ENCODE measurements at regions of chr6 and their contacts with region 1.

Region 1: DNA sequence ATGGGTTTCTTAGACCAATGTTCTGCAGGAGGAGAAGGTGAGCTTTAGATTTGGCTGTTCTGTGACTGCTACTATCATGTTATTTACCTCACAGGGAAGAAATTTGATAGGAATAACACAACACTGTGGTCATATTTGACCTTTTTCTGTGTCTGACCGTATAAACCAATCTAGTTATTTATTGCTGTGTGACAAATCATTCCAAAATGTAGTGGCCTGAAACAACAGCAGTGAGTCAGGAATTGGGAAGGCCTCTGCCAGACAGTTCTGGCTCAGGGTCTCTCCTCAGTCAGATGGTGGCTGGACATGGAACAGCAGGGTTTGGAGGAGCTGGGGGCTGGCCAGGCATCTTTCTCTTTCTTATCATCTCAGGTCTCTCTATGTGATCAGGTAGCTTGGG is 33.0 kb downstream of the RIPOR2 start:
- DNase-seq: no peak
- CTCF ChIP-seq: no peak

Region 2: GRCh38 chr6:24883618-24884017 is 19.2 kb before region 1 on chr6:
- CTCF ChIA-PET with region 1: interaction called, 22 read pairs
- POLR2A ChIA-PET with region 1: no interaction called
- DNase-seq: no peak
- CTCF ChIP-seq: no peak

Region 3: GRCh38 chr6:24888715-24889370 is 13.9 kb before region 1 on chr6:
- CTCF ChIA-PET with region 1: interaction called, 22 read pairs
- POLR2A ChIA-PET with region 1: no interaction called
- DNase-seq: no peak
- CTCF ChIP-seq: no peak

Measured in GM10248 (cell line).